B cell (primary cell): ENCODE measurements at regions of chr11 and their contacts with region 1.

Region 1: GRCh38 chr11:114439229-114440120 is at the start of gene REXO2:
- DNase-seq: peak; percentile 95
- ATAC-seq: peak; percentile 99
- H3K4me3 ChIP-seq: peak within 1 kb of the TSS; percentile 48 to 95 (median 88)
- H3K4me3 Mint-ChIP-seq: peak within 1 kb of the TSS; percentile 99
- H3K27ac ChIP-seq: peak within 1 kb of the TSS in 1 of 2 donors; percentile 75
- H3K27ac Mint-ChIP-seq: peak within 1 kb of the TSS; percentile 92
- H3K4me1 ChIP-seq: peaks cover 12 to 13% of the 10 kb centered on the region in 2 donors
- H3K4me1 Mint-ChIP-seq: peaks cover 25% of the 10 kb centered on the region
- H3K27me3 ChIP-seq: no peaks in the 10 kb centered on the region
- H3K27me3 Mint-ChIP-seq: no peaks in the 10 kb centered on the region
- CTCF ChIP-seq: no peak
- total RNA-seq, gene REXO2: 27.7 and 34.3 TPM in 2 replicates

Region 2: DNA sequence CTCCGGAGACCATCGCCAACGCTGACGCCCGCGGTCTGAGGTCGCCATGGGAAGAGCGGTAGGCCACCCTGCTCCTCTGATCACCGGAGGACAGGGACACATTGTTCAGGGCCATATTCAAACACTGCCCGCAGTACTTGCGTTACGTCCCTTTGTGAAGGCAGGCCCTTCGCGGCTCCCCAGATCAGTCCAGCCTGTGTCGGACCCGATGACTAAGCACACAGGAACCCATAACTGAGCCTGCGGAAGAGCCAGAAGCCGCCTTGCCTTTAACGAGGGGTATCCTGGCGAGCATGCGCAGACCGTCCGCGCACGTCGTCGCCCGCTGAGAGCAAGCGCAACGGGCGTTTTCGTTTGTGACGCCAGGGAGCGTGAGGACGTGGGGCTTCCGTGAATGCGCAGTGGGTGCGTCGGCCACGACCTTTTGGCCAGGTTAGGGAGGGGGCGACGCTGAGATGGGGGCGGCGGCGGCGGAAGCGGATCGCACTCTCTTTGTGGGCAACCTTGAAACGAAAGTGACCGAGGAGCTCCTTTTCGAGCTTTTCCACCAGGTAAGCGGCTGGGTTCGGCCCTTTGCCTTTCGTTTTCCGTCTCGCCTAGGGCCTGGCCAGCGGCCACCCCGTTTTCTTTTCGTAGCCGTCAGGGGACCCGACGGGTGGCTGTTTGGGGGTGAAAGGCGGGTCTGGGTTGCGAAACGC is 39.1 kb before region 1 on chr11 and contains the starts of genes C11orf71 and RBM7:
- CTCF ChIA-PET with region 1: interaction called, 3 read pairs
- POLR2A ChIA-PET with region 1: interaction called, 3 read pairs
- intact Hi-C with region 1: loop called (anchors 1 kb)
- DNase-seq: peak; percentile 99
- ATAC-seq: peak; percentile 94
- H3K4me3 ChIP-seq: peak within 1 kb of the TSS; percentile 72 to 98 (median 89)
- H3K4me3 Mint-ChIP-seq: peak within 1 kb of the TSS; percentile 99
- H3K27ac ChIP-seq: peak within 1 kb of the TSS; percentile 87 to 92
- H3K27ac Mint-ChIP-seq: peak within 1 kb of the TSS; percentile 98
- H3K4me1 ChIP-seq: peaks cover 21 to 28% of the 10 kb centered on the region in 2 donors
- H3K4me1 Mint-ChIP-seq: peaks cover 45% of the 10 kb centered on the region
- H3K27me3 ChIP-seq: no peaks in the 10 kb centered on the region
- H3K27me3 Mint-ChIP-seq: no peaks in the 10 kb centered on the region
- CTCF ChIP-seq: no peak
- total RNA-seq, gene C11orf71: 14.8 and 14.9 TPM in 2 replicates
- total RNA-seq, gene RBM7: 34.8 and 36.1 TPM in 2 replicates